ENCODE measurements at regions of chr5 and their contacts with region 1.

Region 1: DNA sequence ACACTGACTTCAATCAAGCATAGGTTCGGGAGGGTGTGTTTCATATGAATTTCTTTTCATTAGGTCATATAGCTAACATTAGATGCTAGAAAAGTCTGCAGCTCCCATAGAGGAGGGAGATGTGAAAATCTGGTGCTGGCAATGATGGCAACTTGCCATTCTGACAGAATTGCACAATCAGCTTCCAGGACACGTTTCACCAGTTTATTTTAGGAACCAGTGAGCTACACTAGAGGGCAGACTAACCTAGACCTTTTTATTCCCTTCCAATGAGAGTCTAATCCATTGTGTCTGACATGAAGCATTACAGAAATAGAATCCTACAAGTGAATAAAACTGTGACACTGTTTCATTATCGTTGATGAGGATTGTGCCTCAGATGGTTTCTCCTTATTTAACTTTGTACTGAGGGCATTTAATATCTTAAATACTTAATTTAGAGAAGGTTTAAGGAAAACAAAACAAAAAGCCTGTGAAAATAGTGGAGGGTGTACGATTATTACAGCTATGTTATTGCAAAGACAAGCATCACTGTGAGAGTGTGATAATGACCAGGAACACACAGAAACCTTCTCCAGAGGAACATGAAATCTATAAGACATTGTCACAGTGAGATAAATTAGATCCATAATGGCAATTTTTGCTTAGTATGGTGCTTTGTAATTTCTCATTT is 363.3 kb upstream of the RPS23 start:
- DNase-seq: peak; percentile 79
- H3K4me3 Mint-ChIP-seq: no peak overlapping the region
- H3K27ac Mint-ChIP-seq: peak overlapping the region; percentile 76
- H3K4me1 Mint-ChIP-seq: peaks cover 39% of the 10 kb centered on the region
- H3K27me3 Mint-ChIP-seq: no peaks in the 10 kb centered on the region
- CTCF ChIP-seq: peak; percentile 47

Region 2: GRCh38 chr5:82735160-82735789 is 93.8 kb after region 1 on chr5:
- CTCF ChIA-PET with region 1: no interaction called
- intact Hi-C with region 1: loop called (anchors 2 kb)
- DNase-seq: peak; percentile 10
- H3K4me3 Mint-ChIP-seq: no peak overlapping the region
- H3K27ac Mint-ChIP-seq: peak overlapping the region; percentile 65
- H3K4me1 Mint-ChIP-seq: peaks cover 47% of the 10 kb centered on the region
- H3K27me3 Mint-ChIP-seq: no peaks in the 10 kb centered on the region
- CTCF ChIP-seq: no peak

Region 3: GRCh38 chr5:82793808-82794419 is 152.4 kb after region 1 on chr5:
- CTCF ChIA-PET with region 1: no interaction called
- intact Hi-C with region 1: loop called (anchors 2 kb)
- DNase-seq: peak; percentile 60
- H3K4me3 Mint-ChIP-seq: no peak overlapping the region
- H3K27ac Mint-ChIP-seq: no peak overlapping the region
- H3K4me1 Mint-ChIP-seq: no peaks in the 10 kb centered on the region
- H3K27me3 Mint-ChIP-seq: no peaks in the 10 kb centered on the region
- CTCF ChIP-seq: peak; percentile 65

Region 4: GRCh38 chr5:82885627-82886389 is 244.3 kb after region 1 on chr5:
- CTCF ChIA-PET with region 1: interaction called, 3 read pairs
- intact Hi-C with region 1: loop called (anchors 2 kb)
- DNase-seq: peak; percentile 46
- H3K4me3 Mint-ChIP-seq: peak overlapping the region; percentile 47
- H3K27ac Mint-ChIP-seq: peak overlapping the region; percentile 18
- H3K4me1 Mint-ChIP-seq: peaks cover 29% of the 10 kb centered on the region
- H3K27me3 Mint-ChIP-seq: no peaks in the 10 kb centered on the region
- CTCF ChIP-seq: no peak

Region 5: GRCh38 chr5:83076742-83077661 is 435.5 kb after region 1 on chr5 and contains the starts of genes TMEM167A and XRCC4:
- CTCF ChIA-PET with region 1: interaction called, 4 read pairs
- intact Hi-C with region 1: loop called (anchors 5 kb)
- DNase-seq: peak; percentile 96
- H3K4me3 Mint-ChIP-seq: peak within 1 kb of the TSS; percentile 96
- H3K27ac Mint-ChIP-seq: peak within 1 kb of the TSS; percentile 98
- H3K4me1 Mint-ChIP-seq: peaks cover 39% of the 10 kb centered on the region
- H3K27me3 Mint-ChIP-seq: no peaks in the 10 kb centered on the region
- CTCF ChIP-seq: no peak
- total RNA-seq, gene TMEM167A: 161 and 165 TPM in 2 replicates
- total RNA-seq, gene XRCC4: 25.5 and 34.2 TPM in 2 replicates

Region 6: DNA sequence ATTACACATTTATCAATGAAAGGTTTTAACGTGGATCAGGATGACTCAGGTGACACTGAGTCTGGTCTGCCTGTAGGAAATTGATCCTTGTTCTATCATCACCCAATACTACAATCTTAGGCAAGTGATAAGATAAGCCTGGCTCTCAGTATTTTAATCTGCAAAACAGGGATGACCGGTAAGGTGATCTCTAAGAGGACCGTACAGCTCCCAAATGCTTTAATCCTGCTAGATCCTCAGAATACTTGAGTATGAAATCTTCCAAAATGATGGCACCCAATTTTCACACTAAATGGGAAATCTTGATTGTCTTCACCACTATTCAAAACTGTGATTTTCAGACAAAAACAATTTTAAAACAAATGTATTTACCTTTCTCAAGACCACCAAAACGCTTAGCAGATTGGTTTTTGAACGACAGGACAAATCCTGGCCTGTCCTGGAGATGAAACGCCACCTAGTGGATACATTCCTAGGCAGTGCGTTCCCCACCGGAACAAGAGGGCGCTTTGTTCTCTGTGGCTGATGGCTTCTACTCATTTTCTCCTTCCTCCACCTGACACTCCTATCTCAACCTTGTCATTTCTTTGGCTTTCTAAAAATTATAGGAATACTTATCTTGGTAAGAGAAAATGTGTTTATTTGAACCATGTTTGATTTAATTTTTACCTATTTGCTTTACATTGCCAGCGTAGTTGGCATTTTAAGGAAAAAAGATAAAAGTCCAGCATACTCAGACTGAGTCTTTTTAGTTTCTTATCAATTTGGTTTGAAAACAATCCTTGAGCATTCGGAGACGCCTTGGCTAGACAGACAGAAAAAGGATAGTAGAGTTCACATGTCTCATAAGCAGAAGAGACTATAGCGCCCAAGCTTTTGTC is 788.9 kb after region 1 on chr5:
- CTCF ChIA-PET with region 1: no interaction called
- intact Hi-C with region 1: loop called (anchors 2 kb)
- DNase-seq: peak; percentile 81
- H3K4me3 Mint-ChIP-seq: no peak overlapping the region
- H3K27ac Mint-ChIP-seq: no peak overlapping the region
- H3K4me1 Mint-ChIP-seq: no peaks in the 10 kb centered on the region
- H3K27me3 Mint-ChIP-seq: no peaks in the 10 kb centered on the region
- CTCF ChIP-seq: peak; percentile 89

Region 7: DNA sequence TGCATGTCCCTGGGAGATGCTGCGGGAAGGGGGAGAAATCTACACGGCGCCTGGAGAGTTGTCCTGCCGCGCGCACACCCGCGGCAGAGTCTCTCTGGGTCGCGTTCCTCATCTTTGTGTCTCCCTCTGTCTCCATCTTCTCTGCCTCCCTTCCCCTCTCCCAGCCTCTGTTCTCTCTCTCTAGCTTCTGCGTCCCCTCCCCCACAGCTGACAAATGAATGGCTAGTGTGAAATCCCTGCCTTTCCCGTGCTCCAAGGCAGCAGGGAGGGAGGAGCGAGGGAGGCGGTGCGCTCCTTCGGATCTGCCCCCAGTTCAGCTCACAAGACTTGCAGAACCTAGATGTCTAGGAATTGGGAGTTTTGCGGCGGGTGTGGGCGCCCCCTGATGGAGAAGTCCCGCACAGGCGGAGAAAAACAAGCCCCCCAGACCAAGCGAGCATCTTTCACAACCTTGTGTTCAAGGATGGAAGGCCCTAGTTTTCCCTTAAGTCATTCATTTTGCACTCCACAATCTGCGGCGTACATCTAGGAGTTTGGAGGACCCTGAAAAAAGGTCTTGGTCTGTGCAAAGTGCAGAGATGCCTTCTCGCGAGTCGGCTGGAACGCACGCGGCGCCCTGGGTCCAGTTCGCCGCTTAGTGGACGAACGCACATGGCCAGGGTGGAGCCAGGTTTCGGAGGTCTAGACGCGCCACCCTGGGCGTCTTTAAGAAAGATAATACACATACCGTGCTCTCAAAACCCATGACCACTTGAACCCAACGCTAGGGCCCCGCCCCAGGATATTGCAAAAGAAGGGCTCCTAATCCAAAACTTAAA is 832.1 kb after region 1 on chr5:
- CTCF ChIA-PET with region 1: interaction called, 4 read pairs
- intact Hi-C with region 1: loop called (anchors 2 kb)
- DNase-seq: peak; percentile 94
- H3K4me3 Mint-ChIP-seq: peak overlapping the region; percentile 77
- H3K27ac Mint-ChIP-seq: peak overlapping the region; percentile 84
- H3K4me1 Mint-ChIP-seq: peaks cover 49% of the 10 kb centered on the region
- H3K27me3 Mint-ChIP-seq: peaks cover 13% of the 10 kb centered on the region
- CTCF ChIP-seq: peak; percentile 97

Region 8: DNA sequence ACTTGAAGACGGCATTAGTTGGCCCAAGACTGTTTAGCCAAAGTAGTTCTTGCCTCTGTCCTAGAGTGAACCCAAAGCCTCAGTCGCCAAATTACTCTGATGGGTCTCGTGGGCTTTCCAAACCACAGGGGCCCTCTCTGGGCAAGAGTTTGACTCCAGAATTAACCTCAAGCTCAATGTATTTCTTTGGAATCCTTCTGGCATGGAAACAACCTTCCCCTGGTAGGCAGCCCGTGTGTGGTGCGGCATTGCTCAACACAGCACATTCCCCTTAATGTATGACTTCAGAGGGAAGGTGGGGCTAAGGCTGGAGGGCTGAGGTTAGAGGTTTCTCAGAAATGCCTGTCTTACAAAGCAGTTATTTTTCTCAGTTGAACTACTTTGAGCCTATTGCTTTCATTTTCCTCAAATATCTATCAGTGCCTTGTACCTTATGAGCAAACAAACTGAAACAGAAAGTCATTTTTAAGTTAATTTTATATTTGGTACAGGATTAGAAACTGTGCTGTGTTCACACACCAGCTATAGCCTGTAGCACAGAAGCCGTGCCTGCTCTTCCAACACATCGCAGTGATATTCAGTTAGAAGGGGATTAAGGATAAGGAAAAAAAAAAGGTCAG is 1203.1 kb after region 1 on chr5:
- CTCF ChIA-PET with region 1: no interaction called
- intact Hi-C with region 1: no loop called
- DNase-seq: peak; percentile 33
- H3K4me3 Mint-ChIP-seq: no peak overlapping the region
- H3K27ac Mint-ChIP-seq: no peak overlapping the region
- H3K4me1 Mint-ChIP-seq: no peaks in the 10 kb centered on the region
- H3K27me3 Mint-ChIP-seq: no peaks in the 10 kb centered on the region
- CTCF ChIP-seq: no peak